ENCODE measurements at regions of chr7 and their contacts with region 1.

Region 1: GRCh38 chr7:128387216-128388144 is 22.3 kb downstream of the IMPDH1 start:
- DNase-seq: peak; percentile 78
- H3K4me3 Mint-ChIP-seq: no peak overlapping the region
- H3K27ac Mint-ChIP-seq: no peak overlapping the region
- H3K4me1 Mint-ChIP-seq: peaks cover 11% of the 10 kb centered on the region
- H3K27me3 Mint-ChIP-seq: no peaks in the 10 kb centered on the region
- CTCF ChIP-seq: peak; percentile 89

Region 2: DNA sequence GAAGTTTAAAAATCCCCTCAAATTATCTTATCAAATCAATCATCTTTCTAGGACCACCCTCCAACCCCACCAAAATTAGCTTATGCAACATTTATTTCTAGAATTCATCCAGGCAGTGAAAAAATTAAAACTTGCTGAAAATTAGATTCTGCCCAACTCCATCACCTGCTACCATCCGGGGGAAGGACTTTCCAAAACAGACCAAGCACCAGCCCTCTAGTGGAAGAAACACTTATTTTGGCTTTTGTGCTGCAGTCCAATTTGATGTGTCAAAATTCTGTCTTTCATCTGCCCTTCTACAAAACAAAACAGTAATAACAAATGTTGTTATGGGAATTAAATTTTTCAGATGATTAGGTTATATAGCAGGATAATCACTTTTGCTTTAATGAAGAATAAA is 837.2 kb before region 1 on chr7:
- CTCF ChIA-PET with region 1: no interaction called
- POLR2A ChIA-PET with region 1: no interaction called
- intact Hi-C with region 1: loop called (anchors 10 kb)
- DNase-seq: no peak
- H3K4me3 Mint-ChIP-seq: no peak overlapping the region
- H3K27ac Mint-ChIP-seq: no peak overlapping the region
- H3K4me1 Mint-ChIP-seq: no peaks in the 10 kb centered on the region
- H3K27me3 Mint-ChIP-seq: no peaks in the 10 kb centered on the region
- CTCF ChIP-seq: no peak

Region 3: GRCh38 chr7:128358233-128358632 is 29.2 kb before region 1 on chr7:
- CTCF ChIA-PET with region 1: interaction called, 34 read pairs
- POLR2A ChIA-PET with region 1: no interaction called
- intact Hi-C with region 1: no loop called
- DNase-seq: no peak
- H3K4me3 Mint-ChIP-seq: no peak overlapping the region
- H3K27ac Mint-ChIP-seq: no peak overlapping the region
- H3K4me1 Mint-ChIP-seq: peaks cover 6% of the 10 kb centered on the region
- H3K27me3 Mint-ChIP-seq: peaks cover 22% of the 10 kb centered on the region
- CTCF ChIP-seq: no peak

Region 4: GRCh38 chr7:128373606-128374005 is 13.9 kb before region 1 on chr7:
- CTCF ChIA-PET with region 1: interaction called, 24 read pairs
- POLR2A ChIA-PET with region 1: interaction called, 3 read pairs
- intact Hi-C with region 1: no loop called
- DNase-seq: no peak
- H3K4me3 Mint-ChIP-seq: no peak overlapping the region
- H3K27ac Mint-ChIP-seq: no peak overlapping the region
- H3K4me1 Mint-ChIP-seq: no peaks in the 10 kb centered on the region
- H3K27me3 Mint-ChIP-seq: no peaks in the 10 kb centered on the region
- CTCF ChIP-seq: no peak

Region 5: GRCh38 chr7:128415217-128415785 is 27.8 kb after region 1 on chr7:
- CTCF ChIA-PET with region 1: interaction called, 11 read pairs
- POLR2A ChIA-PET with region 1: interaction called, 3 read pairs
- intact Hi-C with region 1: no loop called
- DNase-seq: no peak
- H3K4me3 Mint-ChIP-seq: no peak overlapping the region
- H3K27ac Mint-ChIP-seq: no peak overlapping the region
- H3K4me1 Mint-ChIP-seq: no peaks in the 10 kb centered on the region
- H3K27me3 Mint-ChIP-seq: peaks cover 13% of the 10 kb centered on the region
- CTCF ChIP-seq: no peak

Region 6: GRCh38 chr7:128455551-128456254 is 68.2 kb after region 1 on chr7 and contains the start of gene HILPDA:
- CTCF ChIA-PET with region 1: interaction called, 12 read pairs
- POLR2A ChIA-PET with region 1: no interaction called
- intact Hi-C with region 1: no loop called
- DNase-seq: peak; percentile 94
- H3K4me3 Mint-ChIP-seq: peak within 1 kb of the TSS; percentile 95
- H3K27ac Mint-ChIP-seq: peak within 1 kb of the TSS; percentile 88
- H3K4me1 Mint-ChIP-seq: peaks cover 14% of the 10 kb centered on the region
- H3K27me3 Mint-ChIP-seq: peaks cover 25% of the 10 kb centered on the region
- CTCF ChIP-seq: no peak
- total RNA-seq, gene HILPDA: 6.2 and 8.3 TPM in 2 replicates